Activated CD4-positive, alpha-beta T cell treated with anti-CD3 and anti-CD28 coated beads for 36 hours (primary cell): ENCODE measurements at regions of chr11 and their contacts with region 1.

Region 1: GRCh38 chr11:74748211-74749127 is at the start of gene RNF169:
- DNase-seq: peak; percentile 93
- ATAC-seq: peak; percentile 97
- H3K4me3 Mint-ChIP-seq: peak within 1 kb of the TSS; percentile 80
- H3K27ac Mint-ChIP-seq: peak within 1 kb of the TSS; percentile 73
- H3K4me1 Mint-ChIP-seq: peaks cover 29% of the 10 kb centered on the region
- H3K27me3 Mint-ChIP-seq: no peaks in the 10 kb centered on the region
- total RNA-seq, gene RNF169: 15.3 to 16.0 TPM

Region 2: GRCh38 chr11:74170694-74171629 is 577.5 kb before region 1 on chr11 and contains the starts of genes C2CD3 and PPME1:
- CTCF ChIA-PET with region 1: no interaction called
- POLR2A ChIA-PET with region 1: no interaction called
- intact Hi-C with region 1: loop called in 1 of 2 experiments (anchors 1 kb)
- DNase-seq: peak; percentile 98
- ATAC-seq: peak; percentile 96
- H3K4me3 Mint-ChIP-seq: no peak within 1 kb of the TSS
- H3K27ac Mint-ChIP-seq: no peak within 1 kb of the TSS
- H3K4me1 Mint-ChIP-seq: peaks cover 16% of the 10 kb centered on the region
- H3K27me3 Mint-ChIP-seq: no peaks in the 10 kb centered on the region
- total RNA-seq, gene C2CD3: 23.9 to 28.0 TPM
- total RNA-seq, gene PPME1: 54.2 to 61.5 TPM

Region 3: GRCh38 chr11:74592441-74593362 is 155.8 kb before region 1 on chr11 and contains the start of gene POLD3:
- CTCF ChIA-PET with region 1: no interaction called
- POLR2A ChIA-PET with region 1: no interaction called
- intact Hi-C with region 1: loop called in 1 of 2 experiments (anchors 1 kb)
- DNase-seq: peak; percentile 98
- ATAC-seq: peak; percentile 96
- H3K4me3 Mint-ChIP-seq: peak within 1 kb of the TSS; percentile 93
- H3K27ac Mint-ChIP-seq: peak within 1 kb of the TSS; percentile 96
- H3K4me1 Mint-ChIP-seq: peaks cover 27% of the 10 kb centered on the region
- H3K27me3 Mint-ChIP-seq: no peaks in the 10 kb centered on the region
- total RNA-seq, gene POLD3: 70.0 to 79.8 TPM

Region 4: DNA sequence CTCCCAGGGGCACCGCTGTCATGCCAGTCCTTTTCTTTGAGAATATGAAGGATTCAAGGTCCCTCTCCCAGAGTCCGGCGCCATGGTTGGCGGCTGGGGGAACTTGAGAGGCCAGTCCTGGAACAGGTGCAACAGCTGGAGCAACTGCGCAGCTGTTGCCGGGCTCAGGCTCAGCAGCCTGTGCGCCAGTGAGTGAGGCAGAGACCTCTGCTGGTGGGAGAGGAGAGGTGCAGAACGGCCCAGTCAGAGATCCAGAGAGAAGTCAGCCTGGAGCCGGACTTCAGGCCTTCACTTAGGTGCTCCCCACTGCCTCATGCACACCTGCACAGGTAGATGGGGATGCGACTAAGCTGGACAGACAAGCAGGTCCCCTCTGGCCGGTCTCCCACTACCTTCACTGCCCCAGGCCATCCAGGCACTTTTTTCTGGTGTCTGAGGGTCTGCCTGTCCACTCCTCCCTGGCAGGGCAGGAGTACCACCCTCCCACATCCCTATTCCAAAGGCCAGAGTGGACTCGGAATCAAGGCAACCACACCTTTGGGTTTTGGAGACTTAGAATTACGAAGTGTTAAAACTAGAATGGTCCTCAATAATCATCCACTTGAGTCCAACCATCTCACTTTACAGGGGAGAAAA is 21.8 kb before region 1 on chr11:
- CTCF ChIA-PET with region 1: interaction called, 17 read pairs
- POLR2A ChIA-PET with region 1: no interaction called
- intact Hi-C with region 1: no loop called
- DNase-seq: peak; percentile 78
- ATAC-seq: peak; percentile 96
- H3K4me3 Mint-ChIP-seq: no peak overlapping the region
- H3K27ac Mint-ChIP-seq: no peak overlapping the region
- H3K4me1 Mint-ChIP-seq: peaks cover 5% of the 10 kb centered on the region
- H3K27me3 Mint-ChIP-seq: peaks cover 34% of the 10 kb centered on the region